Keratinocyte (primary cell): ENCODE measurements at regions of chr20 and their contacts with region 1.

Region 1: GRCh38 chr20:44861531-44862006 is 23.9 kb upstream of the YWHAB start:
- DNase-seq: no peak
- H3K4me3 ChIP-seq: no peak overlapping the region
- H3K27ac ChIP-seq: no peak overlapping the region
- H3K4me1 ChIP-seq: no peaks in the 10 kb centered on the region
- H3K27me3 ChIP-seq: peaks cover 3% of the 10 kb centered on the region
- CTCF ChIP-seq: no peak

Region 2: GRCh38 chr20:44491635-44492395 is 369.8 kb before region 1 on chr20:
- dilution Hi-C with region 1: no loop called
- DNase-seq: no peak
- H3K4me3 ChIP-seq: no peak overlapping the region
- H3K27ac ChIP-seq: peak overlapping the region; percentile 47
- H3K4me1 ChIP-seq: peaks cover 28% of the 10 kb centered on the region
- H3K27me3 ChIP-seq: no peaks in the 10 kb centered on the region
- CTCF ChIP-seq: no peak

Region 3: DNA sequence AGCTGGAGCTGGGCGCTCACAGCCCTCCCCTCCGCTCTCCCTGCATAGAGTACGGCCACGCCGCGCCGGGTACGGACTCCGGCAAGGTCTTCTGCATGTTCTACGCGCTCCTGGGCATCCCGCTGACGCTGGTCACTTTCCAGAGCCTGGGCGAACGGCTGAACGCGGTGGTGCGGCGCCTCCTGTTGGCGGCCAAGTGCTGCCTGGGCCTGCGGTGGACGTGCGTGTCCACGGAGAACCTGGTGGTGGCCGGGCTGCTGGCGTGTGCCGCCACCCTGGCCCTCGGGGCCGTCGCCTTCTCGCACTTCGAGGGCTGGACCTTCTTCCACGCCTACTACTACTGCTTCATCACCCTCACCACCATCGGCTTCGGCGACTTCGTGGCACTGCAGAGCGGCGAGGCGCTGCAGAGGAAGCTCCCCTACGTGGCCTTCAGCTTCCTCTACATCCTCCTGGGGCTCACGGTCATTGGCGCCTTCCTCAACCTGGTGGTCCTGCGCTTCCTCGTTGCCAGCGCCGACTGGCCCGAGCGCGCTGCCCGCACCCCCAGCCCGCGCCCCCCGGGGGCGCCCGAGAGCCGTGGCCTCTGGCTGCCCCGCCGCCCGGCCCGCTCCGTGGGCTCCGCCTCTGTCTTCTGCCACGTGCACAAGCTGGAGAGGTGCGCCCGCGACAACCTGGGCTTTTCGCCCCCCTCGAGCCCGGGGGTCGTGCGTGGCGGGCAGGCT is 111.3 kb before region 1 on chr20:
- dilution Hi-C with region 1: loop called (anchors 25 kb)
- DNase-seq: no peak
- H3K4me3 ChIP-seq: no peak overlapping the region
- H3K27ac ChIP-seq: no peak overlapping the region
- H3K4me1 ChIP-seq: peaks cover 8% of the 10 kb centered on the region
- H3K27me3 ChIP-seq: peaks cover 64% of the 10 kb centered on the region
- CTCF ChIP-seq: peak in 2 of 3 experiments; percentile 0 to 28

Region 4: GRCh38 chr20:45229264-45230056 is 367.9 kb after region 1 on chr20:
- dilution Hi-C with region 1: no loop called
- DNase-seq: no peak
- H3K4me3 ChIP-seq: no peak overlapping the region
- H3K27ac ChIP-seq: no peak overlapping the region
- H3K4me1 ChIP-seq: no peaks in the 10 kb centered on the region
- H3K27me3 ChIP-seq: no peaks in the 10 kb centered on the region
- CTCF ChIP-seq: peak; percentile 72 to 91 (median 83)